Activated naive CD8-positive, alpha-beta T cell treated with anti-CD3 and anti-CD28 coated beads, Interleukin-2, amount 10 ng/mL, durations not matched to agents 7 days and 5 days (primary cell): ENCODE measurements at regions of chr12 and their contacts with region 1.

Region 1: DNA sequence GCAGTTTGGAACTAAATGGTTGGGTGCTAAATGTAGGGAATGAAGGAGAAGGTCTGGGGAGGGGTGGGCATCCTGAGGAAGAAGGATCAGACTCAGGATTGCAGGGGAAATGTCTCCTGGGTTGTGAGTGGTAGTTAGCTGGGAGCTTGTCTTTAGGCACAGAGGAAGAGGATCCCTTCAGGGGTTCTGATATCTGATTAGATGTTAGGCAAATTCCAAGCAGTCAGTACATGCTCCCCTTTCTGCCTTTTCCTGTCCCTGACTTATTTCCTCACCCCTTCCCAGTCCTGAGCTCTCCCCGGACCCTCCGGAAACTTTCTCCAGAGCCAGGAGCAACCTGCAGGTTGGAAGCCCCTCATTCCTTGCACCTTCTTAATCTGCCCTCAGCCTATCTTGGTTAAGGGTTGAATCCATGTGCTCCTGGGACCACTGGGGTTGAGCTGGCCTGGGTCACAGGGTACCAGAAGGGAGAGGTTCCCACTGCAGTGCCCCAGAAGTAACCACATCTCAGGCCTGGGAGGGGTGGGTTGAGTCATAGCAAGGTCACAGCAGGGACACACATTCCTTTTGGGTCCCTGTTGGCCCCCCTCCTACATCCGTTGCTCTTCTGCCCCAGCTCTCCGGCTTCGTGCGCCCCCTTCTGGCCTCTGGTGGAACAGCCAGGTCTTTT is 1.6 kb downstream of the IGFBP6 start:
- DNase-seq: peak; percentile 91
- ATAC-seq: peak; percentile 26
- H3K4me3 Mint-ChIP-seq: peak overlapping the region; percentile 80
- H3K27ac Mint-ChIP-seq: peak overlapping the region; percentile 92
- H3K4me1 Mint-ChIP-seq: peaks cover 62% of the 10 kb centered on the region
- H3K27me3 Mint-ChIP-seq: peaks cover 2% of the 10 kb centered on the region

Region 2: DNA sequence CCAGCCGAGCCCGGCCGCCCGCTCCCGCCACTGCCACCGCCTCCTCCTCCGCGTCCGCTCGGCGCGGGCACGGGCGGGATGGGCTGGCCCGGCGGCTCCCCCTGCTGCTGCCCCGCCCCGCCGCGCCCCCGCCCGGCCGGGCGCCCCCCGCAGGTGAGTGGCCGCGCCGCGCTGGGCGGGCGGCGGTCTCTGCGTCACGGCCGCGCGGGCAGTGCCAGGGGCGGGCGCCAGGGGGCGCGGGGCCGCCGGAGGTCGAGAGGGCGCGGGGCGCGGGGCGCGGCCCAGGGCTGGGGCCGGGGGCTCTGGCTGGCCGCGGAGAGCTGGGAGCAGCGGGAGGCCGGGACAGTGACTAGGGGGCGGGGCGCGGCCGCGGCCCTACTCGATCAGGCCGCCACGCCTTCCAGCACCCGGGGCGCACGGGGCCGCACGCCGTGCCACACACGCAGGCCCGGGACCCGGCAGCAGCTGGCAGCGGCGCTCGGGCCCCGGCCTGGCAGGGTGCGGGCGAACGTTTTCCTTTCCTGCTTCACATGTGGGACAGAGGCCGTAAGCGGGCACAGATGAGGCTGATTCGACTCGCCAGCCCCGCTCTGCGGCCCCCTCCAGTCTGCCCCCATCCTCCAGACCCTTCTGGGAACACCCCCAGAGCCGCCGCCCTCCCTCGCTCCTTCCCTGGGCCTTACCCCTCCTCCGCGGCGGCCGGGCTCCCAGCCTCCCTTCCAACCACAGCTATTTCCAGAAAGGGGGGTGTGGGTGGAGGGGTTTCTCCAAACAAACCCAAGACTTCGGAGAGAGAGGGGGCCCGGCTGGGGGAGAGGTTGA is 51.7 kb before region 1 on chr12:
- POLR2A ChIA-PET with region 1: interaction called, 10 read pairs
- DNase-seq: peak; percentile 89
- ATAC-seq: peak; percentile 74
- H3K4me3 Mint-ChIP-seq: peak overlapping the region; percentile 42
- H3K27ac Mint-ChIP-seq: no peak overlapping the region
- H3K4me1 Mint-ChIP-seq: peaks cover 19% of the 10 kb centered on the region
- H3K27me3 Mint-ChIP-seq: peaks cover 2% of the 10 kb centered on the region

Region 3: DNA sequence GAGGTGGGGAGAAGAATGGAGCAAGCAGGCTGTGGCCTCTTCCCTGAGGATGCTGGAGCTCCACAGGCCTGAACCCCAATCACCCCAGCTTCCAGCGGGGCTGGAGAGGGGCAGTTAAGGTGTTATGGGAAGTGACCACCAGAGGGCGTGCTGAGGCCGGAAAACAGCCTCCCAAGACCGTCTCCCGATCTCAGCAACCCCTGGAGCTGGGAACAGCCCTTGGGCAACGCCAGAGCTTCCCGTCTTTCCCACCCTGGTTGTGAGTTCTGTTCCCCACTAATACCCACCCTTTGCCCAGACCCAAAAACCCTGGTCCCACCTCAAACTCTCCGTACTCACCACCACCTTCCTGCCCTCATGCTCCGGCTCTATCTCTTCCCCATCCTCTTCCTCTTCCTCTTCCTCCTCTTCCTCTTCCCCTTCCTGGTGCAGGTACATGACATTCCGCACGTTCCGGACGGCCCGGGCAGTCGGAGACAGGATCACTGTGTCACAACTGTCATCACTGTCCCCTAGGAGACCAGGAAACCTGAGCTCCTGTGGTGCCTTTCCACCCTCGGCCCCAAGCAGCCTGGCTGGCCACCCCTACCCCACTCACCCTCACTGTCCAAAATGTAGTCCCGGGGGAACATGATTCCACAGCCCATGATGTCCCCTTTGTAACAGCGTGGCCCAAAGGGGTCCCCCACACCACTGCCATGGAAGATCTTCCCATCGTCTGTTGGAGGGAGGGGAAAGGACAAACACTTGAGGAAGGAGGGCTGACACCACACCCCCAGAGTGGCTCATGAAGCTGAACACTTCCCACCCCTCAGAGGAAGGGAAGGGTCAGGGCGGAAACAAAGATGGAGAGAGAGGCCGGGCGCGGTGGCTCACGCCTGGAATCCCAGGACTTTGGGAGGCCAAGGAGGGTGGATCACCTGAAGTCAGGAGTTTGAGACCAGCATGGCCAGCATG is 32.9 kb before region 1 on chr12:
- POLR2A ChIA-PET with region 1: interaction called, 25 read pairs
- DNase-seq: peak; percentile 72
- ATAC-seq: peak; percentile 69
- H3K4me3 Mint-ChIP-seq: no peak overlapping the region
- H3K27ac Mint-ChIP-seq: peak overlapping the region; percentile 66
- H3K4me1 Mint-ChIP-seq: peaks cover 6% of the 10 kb centered on the region
- H3K27me3 Mint-ChIP-seq: peaks cover under 1% of the 10 kb centered on the region

Region 4: DNA sequence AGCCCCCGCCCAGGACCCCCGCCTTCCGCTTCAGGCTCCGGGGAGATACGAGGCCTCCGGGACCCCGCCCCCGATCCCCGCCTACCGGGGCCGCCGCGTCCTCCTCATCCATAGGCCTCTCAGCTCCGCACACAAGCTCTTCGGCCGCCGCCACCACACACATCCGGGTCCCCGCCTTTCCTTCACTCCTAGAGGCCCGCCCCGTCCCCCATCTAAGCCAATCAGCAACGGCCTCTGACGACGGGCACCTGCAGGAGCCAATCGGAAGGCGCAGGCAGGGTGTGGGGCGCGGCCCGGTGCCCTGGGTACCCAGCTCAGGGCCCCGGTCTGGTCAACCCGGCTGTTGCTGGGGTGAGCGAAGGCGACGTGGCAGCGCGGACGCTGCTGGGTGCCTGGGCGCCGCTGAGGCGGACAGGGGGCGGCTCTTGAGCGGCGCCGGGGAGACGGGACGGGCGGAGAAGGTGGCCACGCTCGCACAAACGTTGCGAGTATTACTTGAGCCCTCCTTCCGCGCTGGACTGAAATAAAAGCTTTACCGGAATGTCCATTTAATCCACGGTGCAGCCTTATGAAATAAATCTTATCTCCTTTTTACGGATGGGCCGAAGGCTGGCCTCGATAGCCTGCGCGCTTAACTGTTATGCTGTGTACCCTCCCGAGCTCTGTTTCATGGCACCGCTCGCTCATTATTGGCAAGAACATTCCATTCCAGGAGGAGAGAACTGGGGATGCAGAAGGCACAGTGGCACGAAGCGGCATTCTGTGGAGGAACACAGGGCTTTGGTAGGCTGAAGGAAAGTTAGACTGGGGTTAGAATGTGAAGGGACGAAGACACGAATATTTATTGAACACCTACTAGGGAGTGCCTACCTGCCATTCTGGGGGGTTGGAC is 19.6 kb before region 1 on chr12 and contains the start of gene SPRYD3:
- POLR2A ChIA-PET with region 1: interaction called, 32 read pairs
- DNase-seq: peak; percentile 99
- ATAC-seq: peak; percentile 98
- H3K4me3 Mint-ChIP-seq: peak within 1 kb of the TSS; percentile 93
- H3K27ac Mint-ChIP-seq: peak within 1 kb of the TSS; percentile 93
- H3K4me1 Mint-ChIP-seq: peaks cover 15% of the 10 kb centered on the region
- H3K27me3 Mint-ChIP-seq: no peaks in the 10 kb centered on the region
- total RNA-seq, gene SPRYD3: 34.4 to 37.8 TPM

Region 5: GRCh38 chr12:53147653-53148052 is 48.5 kb after region 1 on chr12:
- POLR2A ChIA-PET with region 1: no interaction called
- DNase-seq: no peak
- ATAC-seq: no peak
- H3K4me3 Mint-ChIP-seq: no peak overlapping the region
- H3K27ac Mint-ChIP-seq: no peak overlapping the region
- H3K4me1 Mint-ChIP-seq: peaks cover 2% of the 10 kb centered on the region
- H3K27me3 Mint-ChIP-seq: peaks cover 9% of the 10 kb centered on the region

Region 6: DNA sequence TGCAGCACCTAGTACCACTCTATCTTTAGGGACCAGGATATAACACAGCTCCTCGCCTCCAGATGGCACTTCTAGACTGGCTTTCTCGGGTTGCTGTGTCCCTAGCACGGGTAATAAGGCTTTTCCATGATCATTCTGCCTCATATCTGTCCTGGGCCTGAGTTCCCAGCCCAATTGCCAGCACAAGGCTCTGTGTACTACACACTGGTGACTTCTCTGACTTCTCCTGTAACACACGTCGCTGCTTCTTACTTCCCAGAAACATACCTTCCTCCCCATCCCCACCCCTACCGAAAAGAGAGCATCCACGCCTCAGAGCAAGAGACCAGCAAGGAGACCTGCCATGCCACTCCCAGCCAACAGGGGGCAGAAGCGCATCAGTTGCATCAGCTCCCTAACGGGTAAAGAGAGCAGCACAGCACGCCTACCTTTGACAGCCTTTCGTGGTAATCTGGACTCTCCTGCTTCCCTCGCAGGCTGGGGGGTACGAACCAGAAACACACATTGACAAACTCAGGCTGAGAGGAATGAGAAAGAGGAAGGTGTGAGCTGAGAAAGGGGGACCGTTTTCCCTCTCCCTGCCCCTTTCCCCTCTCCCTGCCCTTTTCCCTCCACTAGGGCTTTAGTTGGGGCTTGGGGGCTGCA is 60.2 kb after region 1 on chr12:
- POLR2A ChIA-PET with region 1: interaction called, 13 read pairs
- DNase-seq: peak; percentile 90
- ATAC-seq: peak; percentile 98
- H3K4me3 Mint-ChIP-seq: peak overlapping the region; percentile 22
- H3K27ac Mint-ChIP-seq: peak overlapping the region; percentile 51
- H3K4me1 Mint-ChIP-seq: peaks cover 11% of the 10 kb centered on the region
- H3K27me3 Mint-ChIP-seq: no peaks in the 10 kb centered on the region